GM12878 (cell line): ENCODE measurements at regions of chr7 and their contacts with region 1.

Region 1: GRCh38 chr7:23357190-23358093 is 58.3 kb downstream of the MALSU1 start:
- DNase-seq: no peak
- ATAC-seq: peak; percentile 68
- H3K4me3 ChIP-seq: no peak overlapping the region
- H3K27ac ChIP-seq: no peak overlapping the region; the same call in 1 of the 2 replicates
- H3K4me1 ChIP-seq: peaks cover 30% of the 10 kb centered on the region
- H3K27me3 ChIP-seq: no peaks in the 10 kb centered on the region
- CTCF ChIP-seq: peak; percentile 23 to 62 (median 36); a peak in 2 of 6 replicates
- EP300 ChIP-seq: no peak
- POLR2A ChIP-seq: no peak
- RAD21 ChIP-seq: peak; percentile 72

Region 2: DNA sequence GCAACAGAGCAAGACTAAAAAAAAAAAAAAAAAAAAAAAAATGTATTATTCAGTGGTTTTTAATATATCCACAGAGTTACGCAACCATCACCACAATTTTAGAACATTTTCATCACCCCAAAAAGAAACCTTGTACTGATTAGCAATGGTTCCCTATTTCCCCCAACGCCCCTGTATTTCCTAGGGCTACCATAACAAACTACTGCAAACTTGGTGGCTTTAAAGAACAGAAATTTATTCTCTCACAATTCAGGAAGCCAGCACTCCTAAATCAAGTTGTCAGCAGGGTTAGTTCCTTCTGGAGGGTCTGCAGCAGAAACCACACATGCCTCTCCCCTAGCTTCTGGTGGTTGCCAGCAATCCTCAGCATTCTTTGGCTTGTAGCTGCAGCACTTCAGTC is 181.5 kb before region 1 on chr7:
- CTCF ChIA-PET with region 1: no interaction called
- POLR2A ChIA-PET with region 1: no interaction called
- RAD21 ChIA-PET with region 1: no interaction called
- SMC1A ChIA-PET with region 1: no interaction called
- in situ Hi-C with region 1: no loop called
- intact Hi-C with region 1: no loop called
- DNase-seq: no peak
- ATAC-seq: no peak
- H3K4me3 ChIP-seq: no peak overlapping the region
- H3K27ac ChIP-seq: no peak overlapping the region
- H3K4me1 ChIP-seq: no peaks in the 10 kb centered on the region
- H3K27me3 ChIP-seq: no peaks in the 10 kb centered on the region
- CTCF ChIP-seq: no peak
- EP300 ChIP-seq: no peak
- POLR2A ChIP-seq: no peak
- RAD21 ChIP-seq: no peak

Region 3: DNA sequence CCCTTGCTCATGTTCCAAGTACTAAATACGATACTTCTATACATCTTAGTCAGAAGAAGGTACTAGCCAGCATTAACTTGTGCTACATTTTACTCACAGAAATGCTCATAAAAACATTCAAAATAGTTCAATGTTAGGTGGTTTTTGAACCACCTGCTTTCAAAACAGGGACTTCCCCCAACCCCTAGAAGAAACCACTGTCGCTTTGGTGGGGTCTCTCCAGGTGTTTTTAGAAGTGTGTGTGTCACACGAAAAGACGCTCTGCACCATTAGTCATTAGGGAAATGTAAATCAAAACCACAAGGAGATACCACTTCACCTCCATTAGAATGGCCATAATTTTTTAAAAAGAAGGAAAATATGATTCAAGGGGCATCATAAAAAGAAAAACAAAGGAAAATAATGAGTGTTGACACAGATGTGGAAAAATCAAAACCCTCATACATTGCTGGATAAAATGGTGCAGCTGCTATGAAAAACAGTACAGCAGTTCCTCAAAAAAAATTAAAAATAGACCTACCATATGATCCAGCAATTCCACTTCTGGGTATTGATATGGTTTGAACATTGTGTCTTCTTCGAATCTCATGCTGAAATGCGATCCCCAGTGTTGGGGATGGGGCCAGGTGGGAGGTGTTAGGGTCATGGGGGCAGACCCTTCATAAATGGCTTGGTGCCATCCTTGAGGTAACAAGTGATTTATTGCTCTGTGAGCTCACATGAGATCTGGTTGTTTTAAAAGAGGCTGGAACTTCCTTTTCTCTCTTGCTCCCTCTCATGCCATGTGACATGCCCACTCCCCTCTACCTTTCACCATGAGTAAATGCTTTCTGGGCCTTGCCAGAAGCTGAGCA is 15.9 kb after region 1 on chr7:
- CTCF ChIA-PET with region 1: interaction called, 28 read pairs
- POLR2A ChIA-PET with region 1: no interaction called
- RAD21 ChIA-PET with region 1: interaction called, 9 read pairs
- SMC1A ChIA-PET with region 1: interaction called, 20 read pairs
- in situ Hi-C with region 1: no loop called
- intact Hi-C with region 1: no loop called
- DNase-seq: peak; percentile 76
- ATAC-seq: peak; percentile 74
- H3K4me3 ChIP-seq: peak overlapping the region; percentile 41; the same call in 1 of the 2 replicates
- H3K27ac ChIP-seq: peak overlapping the region; percentile 52
- H3K4me1 ChIP-seq: peaks cover 40% of the 10 kb centered on the region
- H3K27me3 ChIP-seq: no peaks in the 10 kb centered on the region
- CTCF ChIP-seq: no peak
- EP300 ChIP-seq: peak; percentile 51 to 95; a peak in 3 of 4 replicates
- POLR2A ChIP-seq: no peak
- RAD21 ChIP-seq: no peak

Region 4: DNA sequence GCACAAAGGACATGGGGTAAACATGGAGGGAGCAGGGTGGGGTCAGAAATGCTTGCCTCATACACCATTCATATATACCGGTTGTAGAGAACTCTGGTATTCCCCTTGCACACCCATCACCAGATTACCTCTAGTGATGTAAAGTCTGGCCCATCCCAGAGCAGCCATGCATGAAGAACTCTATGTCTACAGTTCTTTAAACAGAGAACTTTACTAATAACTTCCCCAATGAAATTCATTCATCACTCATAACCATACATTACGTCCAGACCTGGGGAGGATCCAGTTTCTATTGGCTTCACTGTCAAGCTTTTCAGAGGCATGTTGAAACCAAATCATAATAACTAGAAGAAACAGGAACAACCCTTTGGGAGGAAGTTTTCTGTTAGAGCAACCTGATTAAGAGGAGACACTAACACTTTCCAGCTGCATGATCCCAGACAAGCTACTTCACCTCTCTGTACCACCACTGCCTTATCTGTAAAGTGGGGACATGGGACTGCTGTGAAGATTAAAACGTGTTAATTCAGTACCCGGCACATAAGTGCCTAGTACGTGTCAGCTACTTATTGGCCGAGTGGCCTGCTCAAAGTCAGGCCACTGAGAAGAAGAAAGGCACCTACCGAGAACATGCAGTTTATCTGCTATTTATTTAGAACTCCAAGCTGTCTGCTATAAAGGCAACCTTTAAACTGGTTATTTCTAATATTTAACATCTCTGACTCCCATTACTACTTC is 53.2 kb after region 1 on chr7:
- CTCF ChIA-PET with region 1: interaction called, 4 read pairs
- POLR2A ChIA-PET with region 1: no interaction called
- RAD21 ChIA-PET with region 1: interaction called, 13 read pairs
- SMC1A ChIA-PET with region 1: interaction called, 15 read pairs
- in situ Hi-C with region 1: no loop called
- intact Hi-C with region 1: no loop called
- DNase-seq: peak; percentile 89
- ATAC-seq: peak; percentile 97
- H3K4me3 ChIP-seq: no peak overlapping the region; the same call in 1 of the 2 replicates
- H3K27ac ChIP-seq: peak overlapping the region; percentile 82
- H3K4me1 ChIP-seq: peaks cover 20% of the 10 kb centered on the region
- H3K27me3 ChIP-seq: no peaks in the 10 kb centered on the region
- CTCF ChIP-seq: no peak
- EP300 ChIP-seq: peak; percentile 65 to 69; a peak in 3 of 4 replicates
- POLR2A ChIP-seq: no peak
- RAD21 ChIP-seq: no peak

Region 5: GRCh38 chr7:23445326-23445725 is 87.9 kb after region 1 on chr7:
- CTCF ChIA-PET with region 1: interaction called, 5 read pairs
- POLR2A ChIA-PET with region 1: no interaction called
- RAD21 ChIA-PET with region 1: interaction called, 9 read pairs
- SMC1A ChIA-PET with region 1: interaction called, 11 read pairs
- in situ Hi-C with region 1: no loop called
- intact Hi-C with region 1: no loop called
- DNase-seq: no peak
- ATAC-seq: peak; percentile 74
- H3K4me3 ChIP-seq: no peak overlapping the region
- H3K27ac ChIP-seq: no peak overlapping the region; the same call in 1 of the 2 replicates
- H3K4me1 ChIP-seq: peaks cover 17% of the 10 kb centered on the region
- H3K27me3 ChIP-seq: no peaks in the 10 kb centered on the region
- CTCF ChIP-seq: no peak
- EP300 ChIP-seq: peak in 1 of 2 experiments; percentile 70; a peak in 1 of 4 replicates
- POLR2A ChIP-seq: no peak
- RAD21 ChIP-seq: no peak

Region 6: GRCh38 chr7:23467806-23468516 is 110.5 kb after region 1 on chr7:
- CTCF ChIA-PET with region 1: interaction called, 10 read pairs
- POLR2A ChIA-PET with region 1: interaction called, 5 read pairs
- RAD21 ChIA-PET with region 1: interaction called, 19 read pairs
- SMC1A ChIA-PET with region 1: interaction called, 12 read pairs
- in situ Hi-C with region 1: no loop called
- intact Hi-C with region 1: loop called (anchors 5 kb)
- DNase-seq: no peak
- ATAC-seq: peak; percentile 31
- H3K4me3 ChIP-seq: peak overlapping the region; percentile 96
- H3K27ac ChIP-seq: peak overlapping the region; percentile 94
- H3K4me1 ChIP-seq: peaks cover 10% of the 10 kb centered on the region
- H3K27me3 ChIP-seq: no peaks in the 10 kb centered on the region
- CTCF ChIP-seq: no peak
- EP300 ChIP-seq: no peak
- POLR2A ChIP-seq: no peak; the same call in 1 of the 2 replicates
- RAD21 ChIP-seq: no peak

Region 7: DNA sequence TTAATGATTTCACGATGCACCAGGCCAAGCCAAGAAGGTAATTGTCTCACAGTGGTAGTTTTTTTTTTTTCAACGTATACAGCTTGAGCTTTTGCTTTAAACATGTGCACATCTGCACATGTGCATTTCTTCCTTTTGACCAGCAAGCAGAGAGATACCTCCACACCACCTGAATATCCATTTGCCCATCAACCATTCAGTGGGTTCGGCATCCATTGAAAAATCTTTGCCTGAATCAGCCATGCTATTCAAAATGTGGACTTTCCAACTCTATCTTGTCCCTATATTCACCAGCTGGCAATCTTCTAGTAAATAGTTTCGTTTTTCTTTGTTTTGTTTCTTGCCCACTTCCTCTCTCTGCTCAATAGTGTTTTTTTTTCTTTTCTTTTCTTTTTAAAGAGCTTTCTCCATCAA is 182.1 kb after region 1 on chr7:
- CTCF ChIA-PET with region 1: interaction called, 71 read pairs
- POLR2A ChIA-PET with region 1: interaction called, 6 read pairs
- RAD21 ChIA-PET with region 1: interaction called, 46 read pairs
- SMC1A ChIA-PET with region 1: interaction called, 50 read pairs
- in situ Hi-C with region 1: no loop called
- intact Hi-C with region 1: loop called (anchors 2 kb)
- DNase-seq: peak; percentile 62
- ATAC-seq: peak; percentile 80
- H3K4me3 ChIP-seq: no peak overlapping the region
- H3K27ac ChIP-seq: peak overlapping the region; percentile 79
- H3K4me1 ChIP-seq: peaks cover 15% of the 10 kb centered on the region
- H3K27me3 ChIP-seq: no peaks in the 10 kb centered on the region
- CTCF ChIP-seq: no peak
- EP300 ChIP-seq: no peak
- POLR2A ChIP-seq: no peak
- RAD21 ChIP-seq: no peak

Region 8: DNA sequence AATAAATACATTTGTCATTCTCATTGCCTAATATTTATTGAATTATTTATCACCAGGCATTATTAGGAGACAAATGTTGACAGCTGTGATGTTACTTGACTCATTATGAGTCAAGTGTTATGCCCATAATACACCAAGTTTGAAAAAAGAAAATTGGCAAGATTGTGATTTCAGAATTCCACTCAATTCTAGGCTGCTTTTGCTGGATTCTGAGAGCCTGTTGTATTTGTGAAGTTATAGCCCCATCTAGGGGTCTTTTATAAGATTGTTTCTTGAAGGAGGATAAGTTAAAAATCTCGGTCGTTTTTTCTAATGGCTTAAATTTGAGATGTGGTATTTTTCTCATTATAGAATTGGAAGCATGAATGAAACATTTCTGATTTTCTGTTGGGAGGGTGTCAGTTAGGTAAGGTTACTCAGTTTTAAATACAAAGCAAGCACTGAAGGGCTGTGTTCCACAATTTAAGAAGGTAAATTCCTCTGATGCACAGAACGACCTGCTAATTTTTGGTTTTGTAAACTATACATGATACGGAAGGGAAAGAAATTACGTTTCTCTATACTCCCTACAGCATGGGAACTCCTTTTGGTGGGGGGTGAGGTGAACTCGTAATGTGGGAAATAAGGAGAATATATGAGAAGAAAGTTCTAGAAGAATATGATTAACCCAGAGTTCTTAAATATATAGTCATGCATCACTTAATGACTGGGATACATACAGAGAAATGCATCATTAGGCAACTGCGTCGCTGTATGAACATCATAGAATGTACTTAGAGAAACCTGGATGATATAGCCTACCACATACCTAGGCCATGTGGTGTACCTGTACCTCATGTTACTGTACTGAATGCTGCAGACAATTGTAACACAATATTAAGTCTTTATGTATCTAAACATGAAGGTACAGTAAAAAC is 355.2 kb after region 1 on chr7:
- CTCF ChIA-PET with region 1: interaction called, 12 read pairs
- POLR2A ChIA-PET with region 1: no interaction called
- RAD21 ChIA-PET with region 1: interaction called, 8 read pairs
- SMC1A ChIA-PET with region 1: interaction called, 4 read pairs
- in situ Hi-C with region 1: no loop called
- intact Hi-C with region 1: no loop called
- DNase-seq: peak; percentile 3
- ATAC-seq: peak; percentile 62
- H3K4me3 ChIP-seq: no peak overlapping the region
- H3K27ac ChIP-seq: no peak overlapping the region
- H3K4me1 ChIP-seq: no peaks in the 10 kb centered on the region
- H3K27me3 ChIP-seq: no peaks in the 10 kb centered on the region
- CTCF ChIP-seq: peak; percentile 22 to 70 (median 27); a peak in 4 of 6 replicates
- EP300 ChIP-seq: no peak
- POLR2A ChIP-seq: no peak
- RAD21 ChIP-seq: peak; percentile 98

Region 9: GRCh38 chr7:23791721-23792120 is 434.3 kb after region 1 on chr7:
- CTCF ChIA-PET with region 1: no interaction called
- POLR2A ChIA-PET with region 1: no interaction called
- RAD21 ChIA-PET with region 1: no interaction called
- SMC1A ChIA-PET with region 1: no interaction called
- in situ Hi-C with region 1: no loop called
- intact Hi-C with region 1: no loop called
- DNase-seq: no peak
- ATAC-seq: no peak
- H3K4me3 ChIP-seq: no peak overlapping the region
- H3K27ac ChIP-seq: no peak overlapping the region
- H3K4me1 ChIP-seq: no peaks in the 10 kb centered on the region
- H3K27me3 ChIP-seq: no peaks in the 10 kb centered on the region
- CTCF ChIP-seq: no peak
- EP300 ChIP-seq: no peak
- POLR2A ChIP-seq: no peak
- RAD21 ChIP-seq: no peak